ENCODE measurements at regions of chr17 and their contacts with region 1.

Region 1: GRCh38 chr17:18033442-18034099 is 5.4 kb downstream of the ATPAF2 start:
- DNase-seq: no peak

Region 2: DNA sequence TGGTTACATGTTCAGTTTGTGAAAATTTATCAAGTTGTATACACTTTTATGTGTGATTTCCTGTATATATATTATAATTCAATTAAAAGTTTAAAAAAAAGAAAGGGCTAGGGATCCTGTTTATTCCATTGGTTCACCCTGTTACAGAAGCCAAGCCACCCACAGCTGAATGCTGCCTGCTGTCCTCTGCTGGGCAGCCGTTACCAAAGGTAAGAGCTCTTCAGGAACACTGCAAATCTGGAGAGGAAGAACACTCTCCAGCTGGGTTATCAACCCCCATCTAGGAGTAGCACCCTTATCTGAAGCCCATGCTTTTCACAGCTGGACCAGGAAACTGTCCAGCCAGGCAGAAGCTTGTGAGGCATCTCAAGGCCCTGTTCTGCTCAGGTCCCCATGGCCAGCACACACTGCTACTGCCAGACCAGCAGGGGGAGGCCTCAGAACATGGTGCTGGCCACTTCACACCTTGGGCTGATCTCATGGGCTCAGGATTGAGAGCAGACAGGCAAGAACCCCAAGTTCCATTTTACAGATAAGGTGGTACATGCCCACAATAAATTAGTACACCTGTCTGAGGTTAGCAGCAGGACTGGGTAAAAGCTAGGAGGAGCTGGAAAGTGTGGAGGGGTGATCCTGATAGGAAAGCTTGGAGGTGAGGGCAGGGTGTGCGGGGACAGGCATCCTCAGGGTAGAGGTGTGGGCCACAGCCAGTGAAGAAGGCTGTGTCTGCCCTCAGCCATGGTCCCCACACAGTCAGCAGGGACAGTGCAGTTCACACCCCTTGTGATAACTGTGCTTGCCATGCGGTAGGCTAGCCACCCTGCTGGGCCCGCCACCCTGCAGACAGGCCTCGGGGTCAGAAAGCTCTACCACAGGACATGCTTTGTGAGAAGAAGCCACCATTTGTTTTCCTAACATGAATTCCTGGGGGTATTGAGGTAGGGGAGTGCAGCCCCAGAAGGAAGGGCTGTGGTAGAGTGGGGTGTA is 142.5 kb before region 1 on chr17:
- intact Hi-C with region 1: loop called (anchors 5 kb)
- DNase-seq: no peak

Region 3: GRCh38 chr17:17994271-17995069 is 39.1 kb before region 1 on chr17:
- intact Hi-C with region 1: loop called (anchors 1 kb)
- DNase-seq: no peak

Measured in cardiac septum (tissue), 1 donor.